ENCODE measurements at regions of chr12 and their contacts with region 1.

Region 1: DNA sequence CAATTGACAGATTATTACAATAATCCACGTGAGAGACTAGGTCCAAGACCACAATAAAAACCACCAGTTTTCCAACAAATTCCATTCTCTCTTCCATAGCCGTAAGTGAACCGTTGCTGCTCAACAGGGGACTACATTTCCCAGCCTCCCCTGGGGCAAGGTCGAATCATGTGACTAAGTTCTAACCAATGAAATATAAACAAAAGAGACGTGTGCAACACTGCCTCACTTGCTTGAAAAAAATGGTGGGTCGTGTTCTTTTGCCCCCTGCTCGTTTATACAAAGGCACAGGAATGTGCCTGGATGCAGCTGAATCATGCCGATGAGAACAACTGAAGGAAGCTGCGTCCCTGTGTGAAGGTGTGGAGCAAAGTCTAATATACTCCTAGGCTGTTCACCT is 51.1 kb downstream of the HSPB8 start:
- DNase-seq: no peak
- H3K4me3 ChIP-seq: no peak overlapping the region
- CTCF ChIP-seq: no peak
- POLR2A ChIP-seq: no peak

Region 2: GRCh38 chr12:117261247-117261646 is 1968.6 kb before region 1 on chr12:
- intact Hi-C with region 1: loop called (anchors 5 kb)
- DNase-seq: no peak
- H3K4me3 ChIP-seq: no peak overlapping the region
- CTCF ChIP-seq: no peak
- POLR2A ChIP-seq: no peak

Measured in lower leg skin (tissue), 4 donors.